Activated CD4-positive, alpha-beta memory T cell treated with anti-CD3 and anti-CD28 coated beads, Interleukin-2, amount 10 ng/mL, durations not matched to agents 7 days and 5 days (primary cell): ENCODE measurements at regions of chr10 and their contacts with region 1.

Region 1: DNA sequence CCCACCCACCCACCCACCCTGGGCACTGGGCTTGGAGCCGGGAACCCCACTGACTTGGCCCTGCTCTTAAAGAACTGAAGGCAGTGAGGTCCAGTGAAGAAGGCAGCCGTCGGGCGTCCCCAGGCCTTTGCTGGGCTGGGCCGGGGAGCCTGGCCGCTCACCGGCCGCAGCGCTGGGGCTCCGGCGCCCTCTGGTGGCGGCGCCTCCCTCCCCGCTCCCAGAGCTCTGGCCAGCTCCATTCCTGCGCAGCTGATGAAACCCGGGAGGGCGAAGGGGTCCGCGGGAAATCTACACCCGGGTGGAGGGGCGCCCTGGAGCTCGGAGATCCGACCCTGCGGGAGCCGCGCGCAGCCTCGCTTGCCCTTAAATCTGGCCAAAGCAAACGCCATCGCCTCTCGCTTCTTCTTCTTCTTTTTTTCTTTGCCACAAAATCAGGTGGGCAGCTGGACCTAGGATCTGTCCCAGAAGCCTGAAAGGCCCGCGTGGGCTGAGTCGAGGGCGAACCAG is 1.7 kb upstream of the CXCL12 start:
- DNase-seq: peak; percentile 32
- H3K4me3 Mint-ChIP-seq: no peak overlapping the region
- H3K27ac Mint-ChIP-seq: no peak overlapping the region
- H3K4me1 Mint-ChIP-seq: peaks cover 4% of the 10 kb centered on the region
- H3K27me3 Mint-ChIP-seq: peaks cover 32% of the 10 kb centered on the region

Region 2: DNA sequence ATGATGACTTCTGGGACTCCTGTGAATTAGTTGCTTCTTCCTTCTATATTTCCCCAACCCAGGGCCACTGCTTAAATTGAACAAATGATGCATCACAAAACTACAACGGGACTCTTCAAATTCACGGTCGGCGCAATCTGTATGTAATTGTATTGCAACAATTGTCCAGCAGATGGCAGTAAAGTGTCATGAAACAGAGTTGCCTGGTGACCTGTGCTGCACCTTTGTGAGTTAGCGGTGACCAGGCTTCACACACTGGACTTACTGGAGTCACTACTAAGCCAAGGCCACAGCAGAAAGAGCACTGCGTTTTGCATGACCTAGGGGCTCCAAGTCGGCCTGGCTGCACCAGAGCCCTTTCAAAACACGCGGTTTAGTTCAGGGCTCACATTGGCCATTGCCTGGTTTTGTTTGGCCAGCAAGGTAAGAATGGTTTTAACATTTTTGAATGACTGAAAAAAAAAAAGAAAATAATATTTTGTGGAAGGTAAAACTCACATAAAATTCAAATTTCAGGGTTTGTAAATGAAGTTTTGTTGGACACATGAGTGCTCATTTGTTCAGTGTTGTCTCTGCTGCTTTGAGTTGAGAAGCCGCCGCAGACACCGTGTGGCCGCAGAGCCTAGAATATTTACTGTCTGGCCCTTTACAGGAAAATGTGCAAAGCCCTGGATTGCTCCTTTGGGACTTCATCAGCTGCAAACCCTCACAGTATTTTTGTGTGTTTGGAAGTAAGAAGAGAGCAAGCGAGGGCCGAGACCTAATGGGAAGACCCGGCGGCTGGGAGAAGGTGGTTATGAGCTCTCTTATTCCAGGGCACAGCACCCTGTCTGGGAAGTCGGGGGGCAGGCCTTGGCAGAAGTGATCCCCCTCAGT is 714.7 kb before region 1 on chr10:
- CTCF ChIA-PET with region 1: interaction called, 14 read pairs
- POLR2A ChIA-PET with region 1: no interaction called
- DNase-seq: peak; percentile 48
- H3K4me3 Mint-ChIP-seq: no peak overlapping the region
- H3K27ac Mint-ChIP-seq: no peak overlapping the region
- H3K4me1 Mint-ChIP-seq: no peaks in the 10 kb centered on the region
- H3K27me3 Mint-ChIP-seq: peaks cover 24% of the 10 kb centered on the region

Region 3: DNA sequence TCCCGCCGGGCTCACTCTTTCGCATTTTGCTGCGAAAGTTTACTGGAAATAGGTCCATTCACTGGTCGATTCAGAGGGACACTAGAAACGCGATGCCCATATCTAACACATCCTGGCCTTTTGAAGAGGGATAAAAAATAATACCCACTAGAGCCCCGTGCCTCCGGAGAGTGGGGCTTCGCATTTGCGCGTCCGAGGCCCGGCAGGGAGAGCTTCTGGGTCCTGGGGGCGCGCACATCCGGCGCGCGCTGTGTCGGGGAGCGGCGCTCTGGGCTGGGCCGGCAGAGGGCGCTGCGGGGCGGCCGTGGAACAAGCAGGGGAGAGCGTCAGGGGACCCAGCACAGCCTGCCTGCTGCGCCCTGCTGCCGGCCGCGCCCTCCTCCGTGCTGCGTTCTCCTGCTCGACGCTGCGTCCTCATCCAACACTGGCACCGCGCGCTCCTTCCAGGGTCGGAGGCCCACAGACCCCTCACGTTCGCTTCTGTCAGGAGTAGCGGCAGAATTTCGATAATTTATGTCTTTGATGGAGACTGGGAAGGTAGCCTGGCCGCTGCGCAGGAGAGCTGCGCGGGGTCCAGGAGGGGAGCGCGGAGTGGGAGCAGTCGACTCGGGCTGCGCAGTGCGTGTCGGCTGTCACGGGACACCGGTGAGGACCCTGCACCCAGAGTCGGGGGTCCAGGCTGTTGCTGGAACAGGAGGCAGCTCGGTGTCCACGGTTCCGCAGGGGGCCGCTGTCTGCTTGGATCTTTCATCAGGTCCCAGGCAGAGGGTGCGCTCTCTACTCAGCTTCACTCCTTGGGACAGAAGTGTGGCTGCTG is 696.4 kb before region 1 on chr10:
- CTCF ChIA-PET with region 1: interaction called, 13 read pairs
- POLR2A ChIA-PET with region 1: no interaction called
- DNase-seq: peak; percentile 85
- H3K4me3 Mint-ChIP-seq: peak overlapping the region; percentile 69
- H3K27ac Mint-ChIP-seq: peak overlapping the region; percentile 28
- H3K4me1 Mint-ChIP-seq: peaks cover 12% of the 10 kb centered on the region
- H3K27me3 Mint-ChIP-seq: peaks cover 25% of the 10 kb centered on the region

Region 4: GRCh38 chr10:44164251-44164956 is 222.2 kb before region 1 on chr10:
- CTCF ChIA-PET with region 1: no interaction called
- POLR2A ChIA-PET with region 1: no interaction called
- DNase-seq: no peak
- H3K4me3 Mint-ChIP-seq: no peak overlapping the region
- H3K27ac Mint-ChIP-seq: no peak overlapping the region
- H3K4me1 Mint-ChIP-seq: no peaks in the 10 kb centered on the region
- H3K27me3 Mint-ChIP-seq: peaks cover 3% of the 10 kb centered on the region

Region 5: DNA sequence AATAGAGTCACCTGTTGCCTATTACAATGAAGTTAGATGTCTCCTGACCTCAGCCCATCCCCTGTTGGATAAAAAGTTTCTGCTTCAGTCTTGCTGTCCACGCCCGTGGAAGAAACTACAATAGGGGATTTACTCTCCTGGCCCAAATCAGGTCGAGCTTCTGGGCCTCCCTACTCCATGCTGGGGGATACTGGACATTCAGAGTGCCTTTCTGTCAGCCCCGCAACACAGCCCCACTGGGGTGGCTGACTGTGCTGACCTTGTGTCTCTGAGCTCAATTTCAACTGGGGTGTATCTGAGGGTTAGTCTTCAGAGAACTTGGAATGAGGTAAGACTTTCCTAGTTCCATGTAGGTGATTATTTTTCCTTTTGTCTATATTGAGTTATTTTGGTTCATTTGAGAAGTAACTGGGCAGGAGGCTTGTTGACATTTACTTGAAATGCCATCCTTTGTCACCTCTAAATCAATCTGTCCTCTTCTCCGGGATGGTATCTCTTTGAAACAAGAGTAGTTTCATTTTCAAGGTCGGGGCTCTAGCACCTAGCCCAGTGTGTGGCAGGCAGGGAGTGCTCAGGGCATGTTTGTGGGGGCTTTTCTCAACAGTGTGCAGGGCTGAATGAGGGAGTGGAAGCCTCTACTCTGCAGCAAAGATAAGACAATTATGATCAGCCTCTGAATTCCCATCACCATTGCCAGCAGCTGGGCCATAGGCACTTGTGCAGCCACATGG is 16.0 kb after region 1 on chr10:
- CTCF ChIA-PET with region 1: no interaction called
- POLR2A ChIA-PET with region 1: no interaction called
- DNase-seq: no peak
- H3K4me3 Mint-ChIP-seq: no peak overlapping the region
- H3K27ac Mint-ChIP-seq: no peak overlapping the region
- H3K4me1 Mint-ChIP-seq: no peaks in the 10 kb centered on the region
- H3K27me3 Mint-ChIP-seq: peaks cover 6% of the 10 kb centered on the region